Activated CD8-positive, alpha-beta memory T cell treated with anti-CD3 and anti-CD28 coated beads, Interleukin-2, amount 10 ng/mL, durations not matched to agents 7 days and 5 days (primary cell): ENCODE measurements at regions of chr2 and their contacts with region 1.

Region 1: GRCh38 chr2:190849774-190850173 is 30.8 kb upstream of the GLS start:
- DNase-seq: no peak
- ATAC-seq: no peak
- H3K4me3 Mint-ChIP-seq: no peak overlapping the region
- H3K27ac Mint-ChIP-seq: no peak overlapping the region
- H3K4me1 Mint-ChIP-seq: peaks cover 7% of the 10 kb centered on the region
- H3K27me3 Mint-ChIP-seq: no peaks in the 10 kb centered on the region

Region 2: GRCh38 chr2:190880378-190881073 is 30.8 kb after region 1 on chr2 and contains the start of gene GLS:
- CTCF ChIA-PET with region 1: interaction called, 19 read pairs
- DNase-seq: peak; percentile 98
- ATAC-seq: peak; percentile 79
- H3K4me3 Mint-ChIP-seq: peak within 1 kb of the TSS; percentile 96
- H3K27ac Mint-ChIP-seq: peak within 1 kb of the TSS; percentile 99
- H3K4me1 Mint-ChIP-seq: peaks cover 35% of the 10 kb centered on the region
- H3K27me3 Mint-ChIP-seq: peaks cover 2% of the 10 kb centered on the region
- total RNA-seq, gene GLS: 187 to 191 TPM

Region 3: GRCh38 chr2:190947711-190948251 is 98.0 kb after region 1 on chr2:
- CTCF ChIA-PET with region 1: interaction called, 25 read pairs
- DNase-seq: no peak
- ATAC-seq: peak; percentile 77
- H3K4me3 Mint-ChIP-seq: no peak overlapping the region
- H3K27ac Mint-ChIP-seq: peak overlapping the region; percentile 65
- H3K4me1 Mint-ChIP-seq: peaks cover 13% of the 10 kb centered on the region
- H3K27me3 Mint-ChIP-seq: no peaks in the 10 kb centered on the region

Region 4: DNA sequence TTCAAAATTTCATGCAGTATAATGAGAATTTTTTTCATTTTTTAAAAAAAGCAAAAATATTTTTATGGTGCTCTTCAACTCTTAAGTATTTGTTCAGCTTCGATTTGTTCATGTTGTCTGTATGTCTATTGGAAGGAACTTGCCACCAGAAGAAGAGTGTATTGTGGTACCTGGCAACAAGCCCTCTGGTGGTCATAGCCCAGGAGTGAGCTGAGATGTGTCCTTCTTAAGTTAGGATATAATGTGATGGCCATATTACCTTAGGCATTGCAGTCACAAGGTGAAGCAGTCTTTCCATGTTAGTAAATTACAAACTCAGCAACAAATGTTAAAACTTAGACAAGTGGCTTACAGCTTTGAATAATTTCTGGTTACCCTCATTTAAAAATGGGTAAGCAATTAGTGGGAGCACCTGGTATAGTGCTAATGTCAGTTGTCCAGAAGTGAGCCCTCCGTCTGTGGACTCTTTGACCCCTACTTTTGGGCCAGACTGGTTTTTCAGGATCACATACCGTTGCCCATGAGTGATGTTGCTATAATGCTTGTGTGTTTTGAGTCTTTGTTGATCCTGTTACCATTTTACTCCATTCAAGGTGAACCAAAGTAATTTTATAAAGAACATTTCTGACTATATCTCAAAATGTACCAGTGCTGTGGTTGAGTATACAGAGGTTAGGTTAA is 452.8 kb after region 1 on chr2:
- CTCF ChIA-PET with region 1: no interaction called
- DNase-seq: no peak
- ATAC-seq: no peak
- H3K4me3 Mint-ChIP-seq: no peak overlapping the region
- H3K27ac Mint-ChIP-seq: no peak overlapping the region
- H3K4me1 Mint-ChIP-seq: no peaks in the 10 kb centered on the region
- H3K27me3 Mint-ChIP-seq: peaks cover 8% of the 10 kb centered on the region